Naive thymus-derived CD4-positive, alpha-beta T cell (primary cell): ENCODE measurements at regions of chr1 and their contacts with region 1.

Region 1: GRCh38 chr1:167442124-167442848 is 76.0 kb downstream of the CD247 start:
- DNase-seq: peak; percentile 79 to 89 (median 87)
- ATAC-seq: peak; percentile 90
- H3K4me3 ChIP-seq: no peak overlapping the region
- H3K4me3 Mint-ChIP-seq: peak overlapping the region; percentile 17 to 75 (median 52)
- H3K27ac ChIP-seq: peak overlapping the region; percentile 57
- H3K27ac Mint-ChIP-seq: peak overlapping the region; percentile 71 to 96 (median 92)
- H3K4me1 ChIP-seq: peaks cover 59 to 85% of the 10 kb centered on the region in 2 donors
- H3K4me1 Mint-ChIP-seq: peaks cover 51 to 99% (median 88%) of the 10 kb centered on the region in 7 donors
- H3K27me3 ChIP-seq: no peaks in the 10 kb centered on the region
- H3K27me3 Mint-ChIP-seq: no peaks in the 10 kb centered on the region

Region 2: DNA sequence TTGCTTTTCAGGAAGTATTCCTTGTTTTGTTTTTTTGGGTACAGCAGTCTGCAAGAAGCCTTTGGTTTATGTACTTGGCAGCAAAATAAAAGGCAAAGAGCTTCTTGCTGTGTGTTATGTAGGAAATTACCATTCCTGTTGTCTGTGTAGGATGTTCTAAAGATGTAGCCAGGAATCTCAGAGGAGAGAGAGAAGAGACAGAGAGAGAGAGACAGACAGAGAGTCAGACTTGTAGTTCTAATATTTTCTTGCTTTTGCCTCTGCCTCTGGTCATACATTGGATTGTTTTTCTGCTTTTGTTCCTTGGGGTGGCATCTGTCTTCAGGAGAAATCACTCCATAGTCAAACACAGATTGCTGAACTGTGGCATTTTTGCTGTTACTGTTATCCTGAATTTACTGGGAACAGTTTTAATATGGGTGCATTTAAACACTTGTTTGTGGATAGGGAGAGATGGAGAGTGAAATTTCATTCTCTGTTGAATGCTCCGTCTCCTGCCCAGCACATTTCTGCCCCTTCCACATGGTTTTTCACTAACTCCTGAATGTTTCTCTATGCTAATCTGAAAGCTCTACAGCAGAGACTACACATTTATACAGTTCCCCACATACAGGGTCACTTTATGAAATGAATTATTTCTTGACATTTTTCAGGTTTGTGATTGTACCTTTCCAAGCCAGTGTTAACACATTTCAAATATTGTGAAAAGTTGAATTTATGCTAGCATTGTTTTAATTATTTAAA is 171.8 kb before region 1 on chr1:
- CTCF ChIA-PET with region 1: interaction called, 9 read pairs
- POLR2A ChIA-PET with region 1: no interaction called
- intact Hi-C with region 1: loop called (anchors 1 kb)
- DNase-seq: no peak
- ATAC-seq: no peak
- H3K4me3 ChIP-seq: no peak overlapping the region
- H3K4me3 Mint-ChIP-seq: no peak overlapping the region
- H3K27ac ChIP-seq: no peak overlapping the region
- H3K27ac Mint-ChIP-seq: no peak overlapping the region
- H3K4me1 ChIP-seq: peaks cover 0 to 2% of the 10 kb centered on the region in 2 donors
- H3K4me1 Mint-ChIP-seq: peaks cover 20 to 71% (median 61%) of the 10 kb centered on the region in 7 donors
- H3K27me3 ChIP-seq: no peaks in the 10 kb centered on the region
- H3K27me3 Mint-ChIP-seq: no peaks in the 10 kb centered on the region

Region 3: DNA sequence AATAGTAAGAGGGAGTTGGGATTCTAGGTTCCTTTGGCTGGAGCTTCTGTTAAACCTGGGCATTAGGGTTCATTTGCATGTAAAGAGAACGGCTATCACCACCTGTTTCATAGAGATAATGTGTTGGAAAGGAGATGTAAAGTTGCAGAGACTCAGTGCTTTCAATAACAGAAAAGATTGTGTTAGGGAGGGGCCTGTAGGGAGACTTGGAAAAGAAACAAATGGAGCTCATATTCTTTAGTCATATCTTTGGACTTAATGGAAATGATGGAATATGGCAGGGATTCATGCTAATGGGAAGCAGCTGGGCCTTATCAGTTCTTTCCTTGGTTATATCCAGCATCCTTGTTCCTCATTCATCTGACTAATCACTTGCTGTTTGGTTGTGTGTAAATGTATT is 68.9 kb before region 1 on chr1:
- CTCF ChIA-PET with region 1: no interaction called
- POLR2A ChIA-PET with region 1: no interaction called
- intact Hi-C with region 1: no loop called
- DNase-seq: no peak
- ATAC-seq: no peak
- H3K4me3 ChIP-seq: no peak overlapping the region
- H3K4me3 Mint-ChIP-seq: no peak overlapping the region
- H3K27ac ChIP-seq: no peak overlapping the region
- H3K27ac Mint-ChIP-seq: peak overlapping the region in 1 of 9 donors; percentile 78
- H3K4me1 ChIP-seq: no peaks in the 10 kb centered on the region
- H3K4me1 Mint-ChIP-seq: peaks cover 0 to 5% (median 0%) of the 10 kb centered on the region in 7 donors
- H3K27me3 ChIP-seq: no peaks in the 10 kb centered on the region
- H3K27me3 Mint-ChIP-seq: no peaks in the 10 kb centered on the region

Region 4: GRCh38 chr1:167430134-167430856 is 12.0 kb before region 1 on chr1:
- CTCF ChIA-PET with region 1: interaction called, 4 read pairs
- POLR2A ChIA-PET with region 1: interaction called, 11 read pairs
- intact Hi-C with region 1: loop called in 1 of 2 experiments (anchors 1 kb)
- DNase-seq: no peak
- ATAC-seq: peak; percentile 31
- H3K4me3 ChIP-seq: no peak overlapping the region
- H3K4me3 Mint-ChIP-seq: peak overlapping the region in 4 of 10 donors; percentile 5 to 71 (median 27)
- H3K27ac ChIP-seq: peak overlapping the region; percentile 14
- H3K27ac Mint-ChIP-seq: peak overlapping the region; percentile 65 to 93 (median 79)
- H3K4me1 ChIP-seq: peaks cover 19 to 21% of the 10 kb centered on the region in 2 donors
- H3K4me1 Mint-ChIP-seq: peaks cover 18 to 85% (median 36%) of the 10 kb centered on the region in 7 donors
- H3K27me3 ChIP-seq: no peaks in the 10 kb centered on the region
- H3K27me3 Mint-ChIP-seq: no peaks in the 10 kb centered on the region

Region 5: DNA sequence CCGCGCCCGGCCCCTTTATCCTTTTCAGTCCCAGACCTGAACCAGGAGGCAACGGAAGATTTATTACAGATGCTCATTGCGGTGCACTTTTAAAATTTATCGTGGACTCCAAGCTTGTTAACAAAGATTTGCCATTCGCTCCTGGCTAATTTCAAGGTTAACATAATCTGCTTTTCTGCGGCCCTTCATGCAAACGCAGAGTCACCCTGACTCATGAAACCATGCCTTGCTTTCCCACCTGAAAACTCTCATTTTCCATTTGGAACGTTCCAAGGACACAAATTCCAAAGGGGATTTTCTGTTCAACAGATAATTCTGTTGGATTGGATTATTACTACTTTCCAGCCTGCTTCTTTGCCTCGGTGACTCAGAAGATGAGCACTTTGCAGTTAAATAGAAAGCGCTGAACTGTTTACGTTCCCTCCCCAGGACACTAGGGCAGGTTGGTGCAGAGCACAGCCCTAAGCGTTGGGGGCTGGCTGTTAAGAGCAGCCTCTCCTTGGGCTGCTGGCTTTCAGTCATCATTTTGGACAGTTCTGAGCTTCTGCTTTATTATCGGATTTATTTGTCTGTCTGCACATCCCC is 24.9 kb after region 1 on chr1:
- CTCF ChIA-PET with region 1: interaction called, 4 read pairs
- POLR2A ChIA-PET with region 1: interaction called, 18 read pairs
- intact Hi-C with region 1: loop called in 1 of 2 experiments (anchors 1 kb)
- DNase-seq: no peak
- ATAC-seq: peak; percentile 57
- H3K4me3 ChIP-seq: no peak overlapping the region
- H3K4me3 Mint-ChIP-seq: peak overlapping the region in 8 of 10 donors; percentile 29 to 82 (median 59)
- H3K27ac ChIP-seq: peak overlapping the region; percentile 69
- H3K27ac Mint-ChIP-seq: peak overlapping the region in 8 of 9 donors; percentile 86 to 98 (median 92)
- H3K4me1 ChIP-seq: peaks cover under 1 to 79% of the 10 kb centered on the region in 2 donors
- H3K4me1 Mint-ChIP-seq: peaks cover 39 to 99% (median 92%) of the 10 kb centered on the region in 7 donors
- H3K27me3 ChIP-seq: no peaks in the 10 kb centered on the region
- H3K27me3 Mint-ChIP-seq: no peaks in the 10 kb centered on the region

Region 6: DNA sequence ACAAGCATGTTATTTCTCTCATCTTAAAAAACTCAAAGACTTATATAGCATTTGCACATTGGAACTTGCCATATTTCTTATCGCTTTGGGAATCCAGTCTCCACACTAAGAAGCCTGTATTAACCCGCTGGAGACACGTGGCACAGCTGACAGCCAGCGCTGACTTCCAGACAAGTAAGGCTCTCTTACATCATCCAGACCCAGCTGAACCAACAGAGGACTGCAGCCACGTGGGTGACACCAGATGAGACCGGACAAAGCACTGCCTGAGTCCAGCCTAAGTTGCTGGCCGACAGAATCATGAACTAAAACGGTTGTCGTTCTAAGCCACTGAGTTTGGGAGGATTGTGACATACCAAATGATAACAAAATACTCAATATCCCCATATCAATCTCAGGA is 82.4 kb after region 1 on chr1:
- CTCF ChIA-PET with region 1: interaction called, 40 read pairs
- POLR2A ChIA-PET with region 1: interaction called, 281 read pairs
- intact Hi-C with region 1: no loop called
- DNase-seq: no peak
- ATAC-seq: no peak
- H3K4me3 ChIP-seq: no peak overlapping the region
- H3K4me3 Mint-ChIP-seq: no peak overlapping the region
- H3K27ac ChIP-seq: no peak overlapping the region
- H3K27ac Mint-ChIP-seq: no peak overlapping the region
- H3K4me1 ChIP-seq: peaks cover 0 to 1% of the 10 kb centered on the region in 2 donors
- H3K4me1 Mint-ChIP-seq: peaks cover 6 to 32% (median 28%) of the 10 kb centered on the region in 7 donors
- H3K27me3 ChIP-seq: no peaks in the 10 kb centered on the region
- H3K27me3 Mint-ChIP-seq: peaks cover 0 to 25% (median 0%) of the 10 kb centered on the region in 5 donors